Activated CD4-positive, alpha-beta memory T cell treated with anti-CD3 and anti-CD28 coated beads, Interleukin-2, amount 10 ng/mL, durations not matched to agents 7 days and 5 days (primary cell): ENCODE measurements at regions of chr17 and their contacts with region 1.

Region 1: GRCh38 chr17:29293890-29294579 is at the start of gene NUFIP2:
- DNase-seq: peak; percentile 99
- H3K4me3 Mint-ChIP-seq: peak within 1 kb of the TSS; percentile 98
- H3K27ac Mint-ChIP-seq: peak within 1 kb of the TSS; percentile 99
- H3K4me1 Mint-ChIP-seq: peaks cover 32% of the 10 kb centered on the region
- H3K27me3 Mint-ChIP-seq: no peaks in the 10 kb centered on the region
- total RNA-seq, gene NUFIP2: 60.1 to 65.3 TPM

Region 2: DNA sequence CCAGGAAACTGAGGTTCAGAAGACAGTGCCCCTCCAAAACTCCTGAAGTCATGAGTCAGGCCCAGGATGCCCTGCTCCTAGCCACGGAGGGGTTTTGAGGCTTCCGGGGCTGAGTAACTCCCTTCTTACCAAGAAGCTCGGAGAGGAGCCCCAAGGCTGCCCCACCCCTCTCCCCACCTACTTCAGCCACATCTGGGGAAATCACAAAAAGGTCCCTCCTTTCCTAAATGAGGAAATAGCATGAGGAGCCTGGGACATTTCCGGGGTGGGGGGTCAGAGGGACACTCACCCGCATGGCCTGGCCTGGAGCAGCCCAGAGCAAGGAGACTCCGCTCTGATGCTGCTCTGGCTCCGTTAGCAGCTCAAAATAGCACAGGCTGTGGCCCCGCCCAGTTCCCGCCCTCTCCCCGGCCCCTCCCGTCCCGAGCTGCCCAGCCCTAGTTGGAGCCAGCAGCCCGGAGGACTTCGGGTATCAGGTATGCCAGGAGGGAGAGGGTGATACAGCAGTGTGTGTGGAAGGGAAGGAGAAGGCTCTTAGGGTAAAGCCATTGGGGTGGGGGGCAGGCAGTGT is 153.9 kb before region 1 on chr17:
- CTCF ChIA-PET with region 1: interaction called, 50 read pairs
- POLR2A ChIA-PET with region 1: interaction called, 45 read pairs
- DNase-seq: peak; percentile 92
- H3K4me3 Mint-ChIP-seq: peak overlapping the region; percentile 98
- H3K27ac Mint-ChIP-seq: peak overlapping the region; percentile 100
- H3K4me1 Mint-ChIP-seq: peaks cover 79% of the 10 kb centered on the region
- H3K27me3 Mint-ChIP-seq: no peaks in the 10 kb centered on the region

Region 3: DNA sequence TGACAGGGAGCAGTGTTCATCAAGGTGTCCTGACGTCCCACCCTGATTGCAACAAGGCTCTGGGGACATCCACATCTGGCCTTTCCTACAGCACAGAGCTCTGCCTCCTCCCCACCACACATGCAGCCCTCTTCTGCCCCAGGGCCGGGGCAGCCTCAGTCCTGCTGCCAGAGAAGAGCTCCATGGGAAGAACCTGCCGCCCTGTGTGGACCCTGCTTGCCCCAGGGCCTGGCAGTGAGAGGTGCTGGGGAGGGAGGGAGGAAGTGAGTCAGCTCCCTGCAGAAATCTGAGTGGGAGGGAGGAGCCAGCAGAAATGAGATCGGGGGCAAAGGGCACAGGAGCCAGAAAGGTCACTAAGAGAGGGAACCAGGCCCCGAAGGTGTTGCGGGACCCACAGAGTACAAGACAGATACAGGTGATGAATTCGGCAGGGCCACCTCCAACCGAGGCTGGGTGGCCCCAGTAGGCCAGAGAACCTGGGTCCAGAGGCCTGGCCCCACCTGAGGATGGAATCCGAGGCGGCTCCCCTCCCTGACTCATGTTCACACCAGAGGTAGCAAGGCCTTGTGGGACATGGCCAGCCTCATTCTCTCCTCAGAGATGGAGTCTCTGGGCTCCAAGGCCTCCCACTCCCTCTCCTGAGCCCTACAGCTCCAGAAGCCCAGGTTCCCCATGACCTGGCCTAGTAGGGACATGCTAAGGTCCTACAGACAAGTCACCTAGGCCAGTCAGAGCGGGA is 138.6 kb before region 1 on chr17:
- CTCF ChIA-PET with region 1: interaction called, 50 read pairs
- POLR2A ChIA-PET with region 1: interaction called, 45 read pairs
- DNase-seq: peak; percentile 77
- H3K4me3 Mint-ChIP-seq: peak overlapping the region; percentile 41
- H3K27ac Mint-ChIP-seq: peak overlapping the region; percentile 90
- H3K4me1 Mint-ChIP-seq: peaks cover 50% of the 10 kb centered on the region
- H3K27me3 Mint-ChIP-seq: no peaks in the 10 kb centered on the region

Region 4: DNA sequence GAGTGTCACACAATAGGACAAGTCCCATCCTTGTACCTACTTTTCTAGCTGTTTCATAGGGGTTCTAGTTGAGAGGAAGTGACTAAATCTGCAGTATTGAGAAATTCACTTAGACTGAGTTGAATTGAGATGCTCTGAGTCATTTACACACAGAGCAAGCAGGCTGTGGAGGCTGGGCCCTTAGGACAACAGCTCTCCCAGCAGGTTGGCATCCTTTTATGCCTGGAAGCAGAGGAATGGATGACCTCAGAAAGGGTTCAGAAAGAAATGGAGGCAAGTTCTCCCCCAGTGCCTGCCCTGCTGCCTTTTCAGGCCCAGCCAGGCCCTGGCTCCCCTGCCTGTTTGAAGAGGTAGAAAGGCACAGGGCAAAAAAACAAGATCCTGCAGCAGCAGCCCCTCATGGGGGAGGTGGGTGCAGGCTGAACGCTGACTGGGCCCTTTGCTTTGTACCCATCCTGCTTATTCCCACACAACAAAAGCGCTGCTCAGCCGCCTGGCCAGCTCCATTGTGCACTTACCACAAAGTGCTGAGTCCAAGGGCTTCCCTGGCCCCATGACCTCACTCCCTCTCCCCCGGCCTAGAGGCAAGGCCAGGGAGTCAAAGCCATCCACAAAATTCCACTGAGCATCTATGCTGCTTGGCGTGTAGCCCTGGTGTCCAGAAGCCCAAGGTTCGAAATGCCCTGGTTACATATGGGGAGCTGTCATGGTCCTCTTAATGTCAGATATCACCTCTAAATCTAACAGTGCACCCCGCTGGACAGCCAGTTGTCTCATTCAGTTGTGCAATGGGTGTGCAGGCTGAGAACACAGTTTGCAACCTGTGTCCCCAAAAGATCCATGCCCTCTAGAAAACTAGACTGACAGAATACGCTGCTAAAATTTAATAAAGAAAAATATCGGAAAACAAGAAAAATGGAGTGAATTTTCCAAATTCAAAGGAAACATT is 52.7 kb before region 1 on chr17:
- CTCF ChIA-PET with region 1: interaction called, 10 read pairs
- POLR2A ChIA-PET with region 1: interaction called, 3 read pairs
- DNase-seq: no peak
- H3K4me3 Mint-ChIP-seq: no peak overlapping the region
- H3K27ac Mint-ChIP-seq: peak overlapping the region; percentile 8
- H3K4me1 Mint-ChIP-seq: peaks cover 17% of the 10 kb centered on the region
- H3K27me3 Mint-ChIP-seq: no peaks in the 10 kb centered on the region

Region 5: GRCh38 chr17:29283271-29283895 is 10.7 kb before region 1 on chr17:
- CTCF ChIA-PET with region 1: interaction called, 11 read pairs
- POLR2A ChIA-PET with region 1: interaction called, 13 read pairs
- DNase-seq: no peak
- H3K4me3 Mint-ChIP-seq: no peak overlapping the region
- H3K27ac Mint-ChIP-seq: no peak overlapping the region
- H3K4me1 Mint-ChIP-seq: peaks cover 43% of the 10 kb centered on the region
- H3K27me3 Mint-ChIP-seq: no peaks in the 10 kb centered on the region

Region 6: DNA sequence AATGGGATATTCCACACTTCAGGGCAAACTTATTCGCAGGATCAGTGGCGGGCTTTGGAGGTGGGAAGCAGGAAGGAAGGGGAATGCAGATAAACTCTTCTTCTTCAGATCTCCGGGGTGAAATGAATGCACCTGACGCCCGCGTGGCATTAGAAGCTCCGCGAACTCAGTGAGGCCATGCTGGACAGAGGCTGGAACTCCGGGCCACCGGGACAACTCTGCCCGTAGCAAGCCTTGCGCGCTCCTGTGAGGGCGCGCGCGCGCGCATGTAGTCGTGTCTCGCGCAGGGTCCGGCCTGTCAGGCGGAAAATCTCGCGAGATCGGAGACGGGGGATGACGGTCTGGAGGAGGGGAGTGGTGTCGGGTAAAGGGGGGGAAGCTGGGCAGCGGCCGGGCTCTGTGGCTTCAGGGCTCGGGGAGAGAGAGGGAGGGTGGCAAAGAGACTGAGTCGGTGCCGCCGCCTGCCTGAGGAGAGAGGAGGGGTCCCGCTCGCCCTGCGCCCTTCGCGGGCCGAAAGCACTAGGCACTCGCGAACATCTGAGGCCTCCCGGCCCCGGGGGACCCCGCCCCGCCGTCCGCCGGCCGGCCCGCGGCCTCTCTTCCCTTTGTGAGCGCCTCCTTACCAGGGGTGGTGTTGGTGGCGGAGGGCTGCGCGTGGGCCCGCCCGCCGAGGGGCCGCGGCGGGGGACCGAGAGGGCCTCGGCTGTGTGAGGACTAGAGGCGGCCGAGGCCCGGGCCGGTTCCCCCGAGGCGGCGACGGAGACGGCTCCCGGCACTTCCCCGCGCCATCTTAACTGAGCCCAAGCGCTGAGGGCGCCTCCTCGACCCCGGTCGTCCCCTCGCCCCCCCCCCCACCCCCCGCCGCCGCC is 96.2 kb after region 1 on chr17 and contains the start of gene TAOK1:
- CTCF ChIA-PET with region 1: no interaction called
- POLR2A ChIA-PET with region 1: interaction called, 12 read pairs
- DNase-seq: peak; percentile 98
- H3K4me3 Mint-ChIP-seq: peak within 1 kb of the TSS; percentile 97
- H3K27ac Mint-ChIP-seq: peak within 1 kb of the TSS; percentile 87
- H3K4me1 Mint-ChIP-seq: peaks cover 41% of the 10 kb centered on the region
- H3K27me3 Mint-ChIP-seq: no peaks in the 10 kb centered on the region
- total RNA-seq, gene TAOK1: 50.0 to 51.0 TPM